HepG2 (cell line): ENCODE measurements at regions of chr1 and their contacts with region 1.

Region 1: DNA sequence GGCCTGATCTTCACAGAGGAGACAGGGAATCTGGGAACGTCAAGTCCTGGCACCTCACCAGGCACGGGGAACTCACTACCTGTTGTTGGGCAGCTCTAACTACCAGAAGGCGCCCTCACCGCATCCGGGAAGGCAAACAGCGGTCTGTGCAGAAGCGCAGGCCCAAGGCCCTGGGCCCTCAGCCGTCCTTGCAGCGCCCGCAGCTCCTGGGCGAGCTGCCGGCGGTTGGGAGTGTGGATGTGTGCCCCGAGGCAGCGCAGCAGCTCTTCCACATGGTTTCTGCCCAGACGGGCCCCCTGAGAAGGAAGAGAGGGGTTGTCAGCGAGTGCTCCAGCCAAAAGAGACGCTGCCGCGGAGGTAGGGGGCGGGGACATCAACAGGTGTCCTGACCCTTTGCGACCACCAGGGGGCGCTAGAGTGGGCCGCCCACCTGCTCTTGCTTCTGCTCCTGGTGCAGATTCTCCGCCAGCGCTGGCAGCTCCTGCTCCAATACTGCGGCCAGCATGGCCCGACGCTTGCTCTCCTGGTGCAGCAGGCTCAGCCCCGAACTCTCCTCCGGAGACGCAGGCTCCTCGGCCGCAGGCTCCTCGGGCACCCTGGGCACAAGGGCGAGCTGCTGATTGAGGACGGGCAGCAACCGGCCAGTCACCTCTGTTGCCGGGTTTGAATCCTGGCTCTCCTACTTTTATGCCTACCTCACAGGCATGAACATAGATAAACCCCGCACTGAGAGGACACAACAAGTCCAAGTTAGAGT is 9.3 kb downstream of the MAP3K6 start:
- DNase-seq: peak; percentile 43
- ATAC-seq: peak; percentile 83
- H3K4me3 ChIP-seq: peak overlapping the region in 2 of 3 experiments; percentile 33 to 61; a peak in 3 of 6 replicates
- H3K27ac ChIP-seq: no peak overlapping the region
- H3K4me1 ChIP-seq: peaks cover 8% of the 10 kb centered on the region; the same call in 1 of the 2 replicates
- H3K27me3 ChIP-seq: no peaks in the 10 kb centered on the region
- CTCF ChIP-seq: peak; percentile 95
- EP300 ChIP-seq: no peak
- POLR2A ChIP-seq: no peak
- RAD21 ChIP-seq: peak; percentile 85

Region 2: DNA sequence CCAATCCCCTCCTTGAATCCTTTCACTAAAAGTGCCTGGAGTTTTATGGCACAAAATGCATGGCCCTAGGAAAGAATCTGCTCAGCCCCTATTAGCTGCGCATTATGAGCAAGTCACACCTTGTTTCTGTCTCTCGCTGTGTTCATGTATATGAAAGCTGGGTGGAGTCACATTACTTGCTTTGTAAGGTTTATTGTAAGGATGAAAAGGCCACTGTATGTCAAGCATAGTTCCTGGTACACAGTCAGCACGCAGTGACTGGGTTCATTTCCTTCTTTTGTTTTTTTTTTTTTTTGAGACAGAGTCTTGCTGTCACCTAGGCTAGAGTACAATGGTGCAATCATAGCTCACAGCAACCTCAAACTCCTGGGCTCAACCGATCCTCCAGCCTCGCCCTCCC is 195.9 kb before region 1 on chr1:
- CTCF ChIA-PET with region 1: no interaction called
- POLR2A ChIA-PET with region 1: no interaction called
- in situ Hi-C with region 1: no loop called
- intact Hi-C with region 1: no loop called
- DNase-seq: no peak
- ATAC-seq: no peak
- H3K4me3 ChIP-seq: no peak overlapping the region
- H3K27ac ChIP-seq: no peak overlapping the region
- H3K4me1 ChIP-seq: peaks cover 14% of the 10 kb centered on the region; the same call in 1 of the 2 replicates
- H3K27me3 ChIP-seq: no peaks in the 10 kb centered on the region
- CTCF ChIP-seq: no peak
- EP300 ChIP-seq: no peak
- POLR2A ChIP-seq: no peak
- RAD21 ChIP-seq: no peak

Region 3: DNA sequence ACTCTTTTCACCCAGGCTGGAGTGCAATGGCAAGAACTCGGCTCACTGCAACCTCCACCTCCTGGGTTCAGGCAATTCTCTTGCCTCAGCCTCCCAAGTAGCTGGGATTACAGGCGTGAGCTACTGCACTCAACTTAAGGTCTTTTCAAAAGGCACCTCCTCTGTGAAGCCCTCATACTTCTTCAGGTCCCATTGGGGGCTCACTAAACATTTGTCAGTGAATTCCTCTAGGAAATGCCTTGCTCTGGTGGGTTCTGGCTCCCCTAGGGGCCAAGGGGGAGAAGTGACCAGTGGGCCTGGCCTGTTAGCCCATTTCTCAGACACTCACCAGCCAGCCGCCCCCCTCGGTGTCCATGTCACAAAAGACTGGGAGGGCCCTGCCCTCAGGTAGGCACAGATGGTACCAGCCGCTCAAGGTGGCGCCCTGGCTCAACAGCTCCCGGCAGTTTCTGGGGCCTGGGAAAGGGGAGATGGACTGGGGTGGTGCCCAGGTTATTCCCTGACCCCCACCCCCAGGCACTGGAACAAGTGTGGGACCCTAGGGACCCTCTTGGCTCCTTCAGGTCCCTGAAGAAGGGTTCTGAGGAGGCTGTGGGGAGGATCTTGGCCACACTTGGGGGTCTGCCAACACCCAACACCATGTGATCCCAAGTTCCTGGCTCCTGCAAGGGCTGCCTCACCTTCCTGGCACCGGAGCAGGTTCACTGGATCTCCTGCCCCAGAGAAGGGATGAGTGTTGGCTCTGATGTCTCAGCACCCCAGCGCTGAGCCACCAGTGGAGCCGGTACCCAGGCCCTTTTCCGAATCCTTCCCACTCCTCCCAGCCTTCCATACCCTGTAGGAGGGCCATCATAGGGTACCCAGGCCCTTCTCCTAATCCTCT is 15.6 kb after region 1 on chr1:
- CTCF ChIA-PET with region 1: interaction called, 6 read pairs
- POLR2A ChIA-PET with region 1: interaction called, 3 read pairs
- in situ Hi-C with region 1: no loop called
- intact Hi-C with region 1: loop called (anchors 1 kb)
- DNase-seq: no peak
- ATAC-seq: peak; percentile 70
- H3K4me3 ChIP-seq: no peak overlapping the region
- H3K27ac ChIP-seq: no peak overlapping the region
- H3K4me1 ChIP-seq: peaks cover 2% of the 10 kb centered on the region
- H3K27me3 ChIP-seq: peaks cover 5 to 33% of the 10 kb centered on the region in 2 experiments; a peak in 4 of 5 replicates
- CTCF ChIP-seq: no peak; the same call in 1 of the 2 replicates
- EP300 ChIP-seq: no peak
- POLR2A ChIP-seq: no peak
- RAD21 ChIP-seq: no peak